BJ (cell line): ENCODE measurements at regions of chr16 and their contacts with region 1.

Region 1: GRCh38 chr16:28863929-28864793 is 518 bp downstream of the SH2B1 start:
- DNase-seq: no peak
- H3K4me3 ChIP-seq: peak overlapping the region; percentile 95
- H3K27me3 ChIP-seq: no peaks in the 10 kb centered on the region
- CTCF ChIP-seq: no peak

Region 2: GRCh38 chr16:28901862-28902459 is 37.8 kb after region 1 on chr16:
- CTCF ChIA-PET with region 1: no interaction called
- POLR2A ChIA-PET with region 1: no interaction called
- DNase-seq: no peak
- H3K4me3 ChIP-seq: no peak overlapping the region
- H3K27me3 ChIP-seq: no peaks in the 10 kb centered on the region
- CTCF ChIP-seq: no peak

Region 3: GRCh38 chr16:29023279-29024277 is 159.4 kb after region 1 on chr16:
- CTCF ChIA-PET with region 1: no interaction called
- POLR2A ChIA-PET with region 1: no interaction called
- DNase-seq: no peak
- H3K4me3 ChIP-seq: no peak overlapping the region
- H3K27me3 ChIP-seq: peaks cover 1% of the 10 kb centered on the region; the same call in 1 of the 2 replicates
- CTCF ChIP-seq: no peak

Region 4: GRCh38 chr16:29146266-29146665 is 282.1 kb after region 1 on chr16:
- CTCF ChIA-PET with region 1: no interaction called
- POLR2A ChIA-PET with region 1: no interaction called
- DNase-seq: no peak
- H3K4me3 ChIP-seq: no peak overlapping the region
- H3K27me3 ChIP-seq: no peaks in the 10 kb centered on the region
- CTCF ChIP-seq: no peak

Region 5: GRCh38 chr16:29156511-29156910 is 292.4 kb after region 1 on chr16:
- CTCF ChIA-PET with region 1: no interaction called
- POLR2A ChIA-PET with region 1: interaction called, 14 read pairs
- DNase-seq: no peak
- H3K4me3 ChIP-seq: no peak overlapping the region
- H3K27me3 ChIP-seq: no peaks in the 10 kb centered on the region
- CTCF ChIP-seq: no peak